Activated CD4-positive, alpha-beta T cell treated with anti-CD3 and anti-CD28 coated beads for 36 hours (primary cell): ENCODE measurements at regions of chr2 and their contacts with region 1.

Region 1: DNA sequence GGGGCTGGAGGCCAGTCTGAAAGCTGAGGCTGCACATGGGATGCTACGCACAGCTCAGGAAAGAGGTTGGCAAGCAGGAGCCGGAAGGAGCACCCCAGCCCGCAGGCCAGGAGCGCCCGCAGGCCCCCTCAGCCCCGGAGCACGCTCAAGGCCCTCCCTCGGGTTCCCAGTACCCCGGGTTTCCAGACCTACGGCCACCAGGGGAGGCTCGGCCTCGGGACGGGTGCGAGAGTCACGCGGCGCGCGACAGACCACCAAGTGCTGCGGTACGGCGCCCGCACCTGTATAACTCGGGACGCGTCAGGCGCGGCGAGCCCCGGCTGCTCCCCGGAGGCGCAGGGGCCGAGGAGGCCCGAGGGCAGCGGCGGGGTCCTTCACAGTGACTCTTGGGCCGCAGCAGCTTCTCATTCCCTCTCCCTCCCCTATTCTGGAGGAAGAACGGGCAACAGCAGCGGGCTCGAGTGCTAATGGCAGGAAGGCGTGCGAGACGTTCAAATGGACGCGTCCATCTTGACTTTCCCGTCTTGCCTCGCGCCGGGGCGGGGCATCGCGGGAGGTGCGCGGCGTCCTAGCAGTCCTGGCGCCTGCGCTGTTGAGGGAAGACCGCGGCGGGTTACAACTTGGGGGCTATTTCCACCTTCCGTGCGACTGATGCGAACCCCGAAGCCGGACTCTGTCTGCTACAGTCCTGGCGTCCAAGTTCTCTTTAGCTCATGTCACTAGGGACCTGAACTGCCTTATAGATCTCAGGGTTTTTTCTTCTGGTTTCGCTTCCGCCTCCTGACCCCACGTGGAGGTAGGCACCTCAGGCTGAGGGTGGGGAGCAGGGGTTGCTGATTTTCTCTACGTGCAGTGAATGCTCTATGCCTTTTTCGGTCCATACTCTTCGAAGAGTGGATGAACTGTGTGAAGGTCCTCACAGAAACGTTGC is at the start of gene ANAPC1:
- DNase-seq: peak; percentile 92
- ATAC-seq: peak; percentile 95
- H3K4me3 Mint-ChIP-seq: peak within 1 kb of the TSS; percentile 85
- H3K27ac Mint-ChIP-seq: peak within 1 kb of the TSS; percentile 93
- H3K4me1 Mint-ChIP-seq: peaks cover 24% of the 10 kb centered on the region
- H3K27me3 Mint-ChIP-seq: no peaks in the 10 kb centered on the region
- total RNA-seq, gene ANAPC1: 85.1 to 113 TPM

Region 2: GRCh38 chr2:111918383-111918806 is 34.5 kb after region 1 on chr2:
- CTCF ChIA-PET with region 1: no interaction called
- POLR2A ChIA-PET with region 1: interaction called, 11 read pairs
- intact Hi-C with region 1: no loop called
- DNase-seq: no peak
- ATAC-seq: no peak
- H3K4me3 Mint-ChIP-seq: no peak overlapping the region
- H3K27ac Mint-ChIP-seq: no peak overlapping the region
- H3K4me1 Mint-ChIP-seq: no peaks in the 10 kb centered on the region
- H3K27me3 Mint-ChIP-seq: no peaks in the 10 kb centered on the region

Region 3: DNA sequence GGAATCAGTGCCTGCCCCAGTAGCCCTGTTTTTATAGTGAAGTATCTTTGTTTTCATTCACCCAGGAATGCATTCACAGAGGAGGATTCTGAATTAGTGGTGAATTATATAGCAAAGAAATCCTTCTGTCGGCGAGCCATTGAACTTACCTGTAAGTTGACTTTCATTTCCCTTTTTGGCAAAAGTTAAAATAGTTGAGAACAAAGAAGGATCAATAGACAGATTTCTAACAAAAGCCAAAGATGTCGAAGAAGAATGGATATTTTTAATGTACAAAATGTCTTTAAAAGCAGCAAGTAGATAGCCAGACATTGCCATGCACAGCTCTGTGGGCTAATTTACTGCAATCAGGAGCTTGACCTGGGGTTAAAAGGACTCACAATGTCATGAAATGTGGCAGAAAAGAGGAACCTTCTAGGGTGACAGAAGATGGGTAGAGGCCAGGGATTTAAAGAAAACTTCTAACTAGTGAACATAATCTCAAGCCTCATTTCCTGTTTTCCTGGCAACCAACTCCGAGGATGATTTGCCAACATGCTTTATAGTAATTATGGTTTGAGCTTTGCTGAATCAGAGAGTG is 117.3 kb after region 1 on chr2:
- CTCF ChIA-PET with region 1: no interaction called
- POLR2A ChIA-PET with region 1: no interaction called
- intact Hi-C with region 1: no loop called
- DNase-seq: no peak
- ATAC-seq: no peak
- H3K4me3 Mint-ChIP-seq: no peak overlapping the region
- H3K27ac Mint-ChIP-seq: no peak overlapping the region
- H3K4me1 Mint-ChIP-seq: peaks cover 4% of the 10 kb centered on the region
- H3K27me3 Mint-ChIP-seq: no peaks in the 10 kb centered on the region

Region 4: DNA sequence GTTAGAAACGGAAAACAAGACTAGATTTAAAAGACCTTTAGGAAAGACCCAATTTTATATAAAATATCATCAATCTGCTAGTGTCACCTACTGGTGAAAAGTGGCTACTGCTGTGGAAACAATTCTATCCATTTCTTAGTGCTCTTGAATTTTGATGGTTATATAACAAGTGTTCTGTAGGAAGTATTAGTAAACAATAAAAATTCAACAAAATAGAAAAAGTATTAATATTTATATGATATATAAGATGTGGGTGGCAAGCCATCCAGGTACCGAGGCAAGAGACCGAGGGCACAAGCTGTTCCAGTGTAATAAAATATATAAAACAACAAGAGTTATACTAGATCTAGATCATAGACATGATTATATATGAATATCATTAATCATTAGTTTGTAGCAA is 165.0 kb after region 1 on chr2:
- CTCF ChIA-PET with region 1: interaction called, 19 read pairs
- POLR2A ChIA-PET with region 1: interaction called, 3 read pairs
- intact Hi-C with region 1: loop called (anchors 1 kb)
- DNase-seq: peak; percentile 33
- ATAC-seq: peak; percentile 49
- H3K4me3 Mint-ChIP-seq: no peak overlapping the region
- H3K27ac Mint-ChIP-seq: no peak overlapping the region
- H3K4me1 Mint-ChIP-seq: peaks cover 6% of the 10 kb centered on the region
- H3K27me3 Mint-ChIP-seq: peaks cover 5% of the 10 kb centered on the region

Region 5: DNA sequence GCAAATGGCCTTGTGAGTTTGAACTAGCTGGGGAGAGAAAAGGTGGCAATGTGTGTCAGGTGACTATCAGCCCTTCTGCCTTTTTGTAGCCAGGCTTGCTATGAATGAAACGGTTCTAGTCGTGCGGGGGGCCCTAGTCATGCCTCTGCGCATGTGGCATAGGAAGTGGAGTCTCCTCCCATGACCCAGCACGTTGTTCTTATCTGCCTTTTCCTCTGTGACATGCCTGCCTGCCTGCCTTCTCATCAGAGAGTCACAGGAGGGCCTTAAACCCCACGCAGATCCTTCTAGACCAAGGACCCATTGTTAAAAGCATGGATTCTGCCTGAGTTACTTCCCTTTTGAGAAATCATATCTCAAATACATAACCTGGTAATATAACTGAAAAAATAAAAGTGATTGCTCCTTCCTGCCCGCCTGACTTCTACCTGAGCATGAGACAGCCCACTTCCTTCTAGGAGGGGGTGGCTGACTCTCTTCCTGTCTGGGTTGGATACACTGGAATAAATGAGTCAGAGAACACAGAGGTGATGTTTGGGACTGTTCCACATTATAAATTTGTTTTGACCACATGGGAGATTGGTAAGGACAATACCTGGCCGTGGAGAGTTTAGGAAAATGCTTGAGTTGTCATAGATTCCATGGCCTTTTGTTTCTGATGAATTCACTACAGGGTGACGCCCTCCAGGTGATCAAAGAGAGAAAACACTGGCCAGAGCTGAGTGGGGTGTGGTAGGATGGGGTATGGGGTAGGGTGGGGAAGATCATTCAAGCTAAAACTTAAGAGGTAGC is 304.1 kb after region 1 on chr2:
- CTCF ChIA-PET with region 1: no interaction called
- POLR2A ChIA-PET with region 1: no interaction called
- intact Hi-C with region 1: loop called (anchors 10 kb)
- DNase-seq: peak; percentile 90
- ATAC-seq: peak; percentile 86
- H3K4me3 Mint-ChIP-seq: peak overlapping the region; percentile 62
- H3K27ac Mint-ChIP-seq: peak overlapping the region; percentile 96
- H3K4me1 Mint-ChIP-seq: peaks cover 90% of the 10 kb centered on the region
- H3K27me3 Mint-ChIP-seq: no peaks in the 10 kb centered on the region

Region 6: GRCh38 chr2:112275306-112275886 is 391.5 kb after region 1 on chr2 and contains the start of gene ZC3H6:
- CTCF ChIA-PET with region 1: no interaction called
- POLR2A ChIA-PET with region 1: no interaction called
- intact Hi-C with region 1: loop called (anchors 1 to 10 kb)
- DNase-seq: peak; percentile 100
- ATAC-seq: peak; percentile 98
- H3K4me3 Mint-ChIP-seq: peak within 1 kb of the TSS; percentile 90
- H3K27ac Mint-ChIP-seq: peak within 1 kb of the TSS; percentile 97
- H3K4me1 Mint-ChIP-seq: peaks cover 26% of the 10 kb centered on the region
- H3K27me3 Mint-ChIP-seq: no peaks in the 10 kb centered on the region
- total RNA-seq, gene ZC3H6: 15.1 to 15.3 TPM

Region 7: DNA sequence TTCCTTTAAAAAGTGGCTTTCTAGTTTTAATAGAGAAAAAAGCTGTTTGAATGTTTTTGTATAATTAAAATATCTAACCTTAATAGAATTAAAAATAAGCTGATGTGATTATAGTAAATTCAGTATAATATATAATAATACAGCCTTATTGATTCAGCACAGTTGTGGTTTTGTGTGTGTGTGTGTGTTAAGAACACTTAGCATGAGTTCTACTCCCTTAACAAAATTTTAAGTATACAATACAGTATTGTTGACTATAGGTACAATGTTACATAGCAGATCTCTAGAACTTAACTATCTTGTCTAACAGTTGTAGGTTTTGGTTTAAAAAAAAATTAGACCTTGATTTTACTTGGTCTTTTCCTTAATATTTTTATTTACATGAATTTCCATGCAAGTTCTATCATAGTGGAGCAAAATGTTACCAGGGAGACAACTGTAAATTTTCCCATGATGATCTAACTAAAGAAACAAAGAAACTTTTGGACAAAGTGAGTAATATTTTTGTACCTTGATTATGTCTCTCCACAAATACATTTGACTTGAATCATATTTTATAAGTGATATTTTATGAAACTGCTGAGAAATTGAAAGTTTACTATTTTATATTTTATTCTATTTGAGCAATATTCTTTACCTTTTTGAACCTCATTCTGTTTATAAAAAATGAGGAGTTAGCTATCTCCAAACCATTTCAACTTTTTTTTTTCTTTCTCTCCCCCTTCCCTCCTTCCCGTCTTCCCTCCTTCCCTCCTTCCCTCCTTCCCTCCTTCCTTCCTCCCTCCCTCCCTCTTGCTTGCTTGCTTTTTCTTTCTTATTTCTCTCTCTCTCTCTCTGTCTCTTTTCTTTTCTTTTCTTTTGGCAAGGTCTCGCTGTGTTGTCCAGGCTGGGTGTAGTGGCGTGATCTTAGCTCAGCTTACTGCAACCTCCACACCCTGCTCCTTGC is 437.7 kb after region 1 on chr2:
- CTCF ChIA-PET with region 1: no interaction called
- POLR2A ChIA-PET with region 1: no interaction called
- intact Hi-C with region 1: no loop called
- DNase-seq: no peak
- ATAC-seq: no peak
- H3K4me3 Mint-ChIP-seq: no peak overlapping the region
- H3K27ac Mint-ChIP-seq: no peak overlapping the region
- H3K4me1 Mint-ChIP-seq: no peaks in the 10 kb centered on the region
- H3K27me3 Mint-ChIP-seq: no peaks in the 10 kb centered on the region

Region 8: DNA sequence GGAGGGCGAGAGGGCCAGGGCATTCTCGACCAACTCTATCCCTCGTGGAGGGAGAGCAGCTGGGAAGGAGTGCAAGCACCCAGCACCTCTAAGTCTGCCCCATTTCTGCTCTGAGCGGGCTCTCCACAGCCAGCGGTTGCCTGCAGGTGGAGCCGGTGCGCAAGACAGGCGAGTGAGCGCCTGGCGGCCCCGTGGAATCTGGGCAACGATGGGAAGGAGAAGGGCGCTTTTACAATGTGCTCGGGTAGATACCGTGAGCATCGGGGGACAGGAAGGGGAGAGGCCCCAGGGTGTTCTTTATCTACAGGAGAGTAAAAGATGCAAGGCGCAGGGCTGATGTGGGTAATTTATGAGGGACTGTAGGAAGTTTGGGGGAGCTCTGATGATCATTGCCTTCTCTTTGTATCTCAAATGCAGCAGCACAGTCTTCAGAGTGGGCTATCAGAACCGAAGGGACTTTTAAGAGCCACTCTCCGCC is 597.2 kb after region 1 on chr2:
- CTCF ChIA-PET with region 1: no interaction called
- POLR2A ChIA-PET with region 1: no interaction called
- intact Hi-C with region 1: loop called in 1 of 2 experiments (anchors 5 kb)
- DNase-seq: peak; percentile 93
- ATAC-seq: peak; percentile 88
- H3K4me3 Mint-ChIP-seq: peak overlapping the region; percentile 81
- H3K27ac Mint-ChIP-seq: peak overlapping the region; percentile 85
- H3K4me1 Mint-ChIP-seq: peaks cover 32% of the 10 kb centered on the region
- H3K27me3 Mint-ChIP-seq: no peaks in the 10 kb centered on the region

Region 9: DNA sequence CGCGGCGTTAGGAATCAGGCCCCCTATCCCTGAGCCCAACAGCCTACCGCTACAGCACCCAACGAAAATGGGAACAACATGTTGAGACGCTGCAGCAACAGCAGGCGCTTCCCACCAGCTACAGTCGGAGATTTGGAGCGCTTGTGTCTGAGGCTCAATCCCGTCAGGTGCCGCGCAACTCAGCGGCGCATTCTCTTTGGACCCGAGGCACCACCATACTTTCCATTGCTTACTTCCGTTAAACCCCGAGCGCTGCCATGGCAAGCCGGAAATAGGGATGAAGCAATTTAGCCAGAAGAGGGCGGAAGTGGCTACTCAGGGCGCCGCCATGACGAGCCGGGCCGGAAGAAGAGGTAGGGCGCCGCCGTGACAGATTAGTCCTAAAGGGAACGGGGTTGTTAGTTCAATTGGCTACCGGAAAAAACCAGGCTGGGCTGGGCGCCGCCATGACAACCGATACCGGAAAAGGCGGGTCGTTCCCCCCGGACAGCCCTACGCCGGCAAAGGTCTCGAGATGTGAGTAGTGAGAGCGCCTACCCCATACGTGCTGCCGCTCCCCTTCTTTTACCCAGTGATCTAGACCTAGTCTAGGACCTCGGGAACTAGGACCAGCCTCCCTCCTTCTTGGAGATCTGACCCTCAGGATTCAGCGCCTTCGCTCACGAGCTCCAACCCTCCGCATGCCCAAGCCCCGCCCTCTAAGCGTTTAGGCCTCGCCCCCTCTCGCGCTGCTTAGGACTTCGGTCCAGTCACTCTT is 700.4 kb after region 1 on chr2 and contains the start of gene CHCHD5:
- CTCF ChIA-PET with region 1: no interaction called
- POLR2A ChIA-PET with region 1: no interaction called
- intact Hi-C with region 1: loop called in 1 of 2 experiments (anchors 2 kb)
- DNase-seq: peak; percentile 96
- ATAC-seq: peak; percentile 89
- H3K4me3 Mint-ChIP-seq: peak within 1 kb of the TSS; percentile 95
- H3K27ac Mint-ChIP-seq: peak within 1 kb of the TSS; percentile 93
- H3K4me1 Mint-ChIP-seq: peaks cover 28% of the 10 kb centered on the region
- H3K27me3 Mint-ChIP-seq: no peaks in the 10 kb centered on the region
- total RNA-seq, gene CHCHD5: 34.4 to 37.0 TPM